ENCODE measurements at regions of chr4 and their contacts with region 1.

Region 1: DNA sequence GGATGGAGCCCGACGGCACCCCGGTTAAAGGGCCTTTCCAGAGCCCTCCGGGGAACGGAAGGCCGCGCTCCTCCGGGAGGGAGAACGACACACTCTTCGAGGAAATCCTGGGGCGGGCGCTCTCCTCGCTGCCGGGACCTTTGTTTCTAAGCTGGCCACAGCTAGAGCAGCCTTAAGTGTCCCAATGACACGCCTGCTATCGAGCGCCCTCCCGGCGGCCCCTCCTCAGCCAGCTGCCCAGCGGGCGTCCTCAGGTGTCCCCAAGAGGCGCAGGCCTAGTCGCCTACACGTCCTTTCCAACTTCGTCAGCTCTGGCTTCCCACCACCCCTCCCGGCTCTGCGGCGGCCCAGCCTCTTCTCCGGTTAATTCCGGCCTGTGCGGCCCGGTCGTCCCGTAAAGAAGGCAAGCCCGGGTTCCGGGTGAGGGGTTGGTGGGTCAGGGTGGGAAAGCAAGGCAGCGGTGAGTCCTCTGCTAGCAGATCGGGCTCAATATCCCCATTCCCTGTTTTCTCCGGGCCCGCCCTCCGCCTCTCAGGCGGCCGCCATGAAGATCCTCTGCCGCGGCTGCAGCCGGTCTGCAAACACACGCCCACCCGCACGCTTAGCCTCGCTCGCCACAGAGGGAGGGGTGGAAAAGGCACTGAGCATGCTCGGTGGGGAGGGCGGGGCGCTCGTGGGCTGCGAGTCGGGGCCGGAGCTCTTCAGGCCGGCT is 449 bp upstream of the RAP1GDS1 start:
- DNase-seq: peak; percentile 91
- H3K4me3 Mint-ChIP-seq: peak overlapping the region; percentile 80
- H3K27ac Mint-ChIP-seq: peak overlapping the region; percentile 75
- H3K4me1 Mint-ChIP-seq: peaks cover 15% of the 10 kb centered on the region
- H3K27me3 Mint-ChIP-seq: no peaks in the 10 kb centered on the region
- CTCF ChIP-seq: no peak

Region 2: GRCh38 chr4:98385831-98386230 is 125.1 kb after region 1 on chr4:
- CTCF ChIA-PET with region 1: no interaction called
- intact Hi-C with region 1: loop called (anchors 5 kb)
- DNase-seq: no peak
- H3K4me3 Mint-ChIP-seq: no peak overlapping the region
- H3K27ac Mint-ChIP-seq: no peak overlapping the region
- H3K4me1 Mint-ChIP-seq: peaks cover 1% of the 10 kb centered on the region
- H3K27me3 Mint-ChIP-seq: no peaks in the 10 kb centered on the region
- CTCF ChIP-seq: no peak